ENCODE measurements at regions of chr12 and their contacts with region 1.

Region 1: DNA sequence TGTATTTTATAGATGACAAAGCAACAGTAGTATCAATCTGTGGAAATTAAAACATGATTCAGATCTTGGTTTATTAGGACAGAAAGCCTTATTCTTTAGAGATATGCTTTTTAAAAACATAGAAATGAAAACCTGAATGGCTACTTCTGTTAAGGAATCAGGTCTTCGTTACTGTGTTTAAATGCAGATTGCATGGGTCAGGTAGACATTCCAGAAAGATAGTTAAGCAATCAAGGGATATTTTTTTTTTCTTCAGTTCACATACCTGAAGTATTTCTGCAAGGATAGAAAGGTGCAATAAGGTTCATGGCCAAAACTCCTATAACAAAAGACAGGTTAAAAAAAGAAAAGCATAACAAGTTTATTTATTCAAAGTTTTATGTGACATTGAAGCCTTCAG is 577.7 kb downstream of the CCER1 start:
- DNase-seq: no peak
- H3K4me3 Mint-ChIP-seq: no peak overlapping the region
- H3K27ac Mint-ChIP-seq: no peak overlapping the region
- H3K4me1 Mint-ChIP-seq: no peaks in the 10 kb centered on the region
- H3K27me3 Mint-ChIP-seq: no peaks in the 10 kb centered on the region
- CTCF ChIP-seq: no peak

Region 2: GRCh38 chr12:90129366-90130030 is 247.7 kb before region 1 on chr12:
- CTCF ChIA-PET with region 1: no interaction called
- POLR2A ChIA-PET with region 1: no interaction called
- intact Hi-C with region 1: no loop called
- DNase-seq: no peak
- H3K4me3 Mint-ChIP-seq: no peak overlapping the region
- H3K27ac Mint-ChIP-seq: no peak overlapping the region
- H3K4me1 Mint-ChIP-seq: peaks cover 2% of the 10 kb centered on the region
- H3K27me3 Mint-ChIP-seq: no peaks in the 10 kb centered on the region
- CTCF ChIP-seq: no peak

Region 3: GRCh38 chr12:90390947-90391346 is 13.7 kb after region 1 on chr12:
- CTCF ChIA-PET with region 1: no interaction called
- POLR2A ChIA-PET with region 1: no interaction called
- intact Hi-C with region 1: loop called (anchors 1 kb)
- DNase-seq: no peak
- H3K4me3 Mint-ChIP-seq: no peak overlapping the region
- H3K27ac Mint-ChIP-seq: no peak overlapping the region
- H3K4me1 Mint-ChIP-seq: peaks cover 6% of the 10 kb centered on the region
- H3K27me3 Mint-ChIP-seq: no peaks in the 10 kb centered on the region
- CTCF ChIP-seq: no peak